ENCODE measurements at regions of chr9 and their contacts with region 1.

Region 1: GRCh38 chr9:113150670-113151611 is at the start of gene SLC31A2:
- DNase-seq: peak; percentile 84
- H3K4me3 ChIP-seq: peak within 1 kb of the TSS; percentile 82 to 93 (median 92)
- H3K27ac ChIP-seq: peak within 1 kb of the TSS; percentile 89
- H3K4me1 ChIP-seq: peaks cover 44% of the 10 kb centered on the region
- H3K27me3 ChIP-seq: no peaks in the 10 kb centered on the region
- CTCF ChIP-seq: peak in 1 of 2 donors; percentile 51
- total RNA-seq, gene SLC31A2: 68.5 to 80.7 TPM

Region 2: GRCh38 chr9:112890106-112891081 is 260.5 kb before region 1 on chr9 and contains the start of gene SLC46A2:
- CTCF ChIA-PET with region 1: no interaction called
- dilution Hi-C with region 1: no loop called
- in situ Hi-C with region 1: no loop called
- intact Hi-C with region 1: no loop called
- DNase-seq: peak; percentile 18
- H3K4me3 ChIP-seq: peak within 1 kb of the TSS; percentile 15 to 42 (median 42)
- H3K27ac ChIP-seq: no peak within 1 kb of the TSS
- H3K4me1 ChIP-seq: peaks cover 9% of the 10 kb centered on the region
- H3K27me3 ChIP-seq: no peaks in the 10 kb centered on the region
- CTCF ChIP-seq: no peak
- total RNA-seq, gene SLC46A2: not detected

Region 3: DNA sequence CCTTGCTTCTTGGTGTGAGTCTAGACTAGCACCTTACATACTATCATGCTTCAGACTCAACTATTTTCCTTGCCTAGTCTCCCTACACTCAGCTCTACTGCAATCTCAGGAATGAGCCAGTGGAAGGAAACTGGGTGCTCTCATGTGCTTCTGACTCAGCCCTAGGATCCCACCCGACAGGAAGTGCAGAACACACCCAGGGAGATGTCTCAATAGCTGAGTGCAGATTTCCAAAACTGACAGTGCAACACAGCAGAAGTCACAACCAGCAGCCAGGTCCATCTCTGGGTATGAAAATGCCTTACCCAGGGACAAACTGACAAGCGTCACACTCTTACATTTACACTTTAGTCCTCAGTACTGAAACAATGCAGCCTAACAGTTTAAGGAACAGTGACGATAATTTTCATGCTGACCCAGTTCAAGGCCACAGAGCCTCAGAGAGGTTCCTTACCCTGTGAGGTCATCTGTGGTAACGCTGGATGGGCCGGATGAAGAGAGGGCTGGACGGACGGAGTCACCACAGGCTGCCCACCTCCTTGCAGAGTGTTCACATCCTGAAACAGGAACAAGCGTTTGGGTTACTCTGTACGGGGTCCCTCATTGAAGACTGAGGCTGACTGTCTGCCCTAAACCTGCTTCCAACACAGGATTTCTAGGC is 37.1 kb after region 1 on chr9:
- CTCF ChIA-PET with region 1: no interaction called
- dilution Hi-C with region 1: no loop called
- in situ Hi-C with region 1: no loop called
- intact Hi-C with region 1: loop called (anchors 2 kb)
- DNase-seq: peak; percentile 93
- H3K4me3 ChIP-seq: peak overlapping the region in 1 of 3 experiments; percentile 2
- H3K27ac ChIP-seq: peak overlapping the region; percentile 68
- H3K4me1 ChIP-seq: peaks cover 31% of the 10 kb centered on the region
- H3K27me3 ChIP-seq: no peaks in the 10 kb centered on the region
- CTCF ChIP-seq: no peak

Region 4: DNA sequence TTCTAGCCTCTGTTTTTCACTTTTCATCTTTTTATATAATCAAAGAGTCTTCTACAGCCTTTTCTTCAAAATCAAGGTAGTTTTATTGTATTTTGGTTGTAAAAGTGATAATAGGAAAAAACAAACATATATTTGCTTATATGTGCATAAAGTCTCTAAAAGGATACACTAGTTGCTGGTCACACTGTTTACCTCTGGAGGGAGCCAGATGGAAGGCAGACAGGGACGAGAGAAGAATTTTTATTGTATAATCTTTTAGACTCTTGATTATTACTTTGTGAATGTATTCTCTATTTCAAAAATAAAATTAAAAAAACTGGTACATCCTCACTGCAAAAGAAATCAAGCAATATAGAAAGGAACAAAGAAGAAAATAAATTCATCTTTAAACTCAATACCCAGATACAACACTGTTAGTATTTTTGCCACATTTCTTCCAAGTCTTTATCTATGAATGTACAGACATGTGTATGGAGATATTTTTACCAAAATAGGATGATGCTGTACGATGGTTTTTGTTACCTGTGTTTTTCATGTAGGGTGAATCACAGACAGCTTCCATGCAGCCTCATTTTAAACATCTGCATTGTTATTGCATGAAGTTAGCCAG is 158.4 kb after region 1 on chr9:
- CTCF ChIA-PET with region 1: no interaction called
- dilution Hi-C with region 1: no loop called
- in situ Hi-C with region 1: no loop called
- intact Hi-C with region 1: no loop called
- DNase-seq: peak; percentile 9
- H3K4me3 ChIP-seq: no peak overlapping the region
- H3K27ac ChIP-seq: no peak overlapping the region
- H3K4me1 ChIP-seq: no peaks in the 10 kb centered on the region
- H3K27me3 ChIP-seq: no peaks in the 10 kb centered on the region
- CTCF ChIP-seq: peak; percentile 75 to 78